Caco-2 (cell line): ENCODE measurements at regions of chr1 and their contacts with region 1.

Region 1: DNA sequence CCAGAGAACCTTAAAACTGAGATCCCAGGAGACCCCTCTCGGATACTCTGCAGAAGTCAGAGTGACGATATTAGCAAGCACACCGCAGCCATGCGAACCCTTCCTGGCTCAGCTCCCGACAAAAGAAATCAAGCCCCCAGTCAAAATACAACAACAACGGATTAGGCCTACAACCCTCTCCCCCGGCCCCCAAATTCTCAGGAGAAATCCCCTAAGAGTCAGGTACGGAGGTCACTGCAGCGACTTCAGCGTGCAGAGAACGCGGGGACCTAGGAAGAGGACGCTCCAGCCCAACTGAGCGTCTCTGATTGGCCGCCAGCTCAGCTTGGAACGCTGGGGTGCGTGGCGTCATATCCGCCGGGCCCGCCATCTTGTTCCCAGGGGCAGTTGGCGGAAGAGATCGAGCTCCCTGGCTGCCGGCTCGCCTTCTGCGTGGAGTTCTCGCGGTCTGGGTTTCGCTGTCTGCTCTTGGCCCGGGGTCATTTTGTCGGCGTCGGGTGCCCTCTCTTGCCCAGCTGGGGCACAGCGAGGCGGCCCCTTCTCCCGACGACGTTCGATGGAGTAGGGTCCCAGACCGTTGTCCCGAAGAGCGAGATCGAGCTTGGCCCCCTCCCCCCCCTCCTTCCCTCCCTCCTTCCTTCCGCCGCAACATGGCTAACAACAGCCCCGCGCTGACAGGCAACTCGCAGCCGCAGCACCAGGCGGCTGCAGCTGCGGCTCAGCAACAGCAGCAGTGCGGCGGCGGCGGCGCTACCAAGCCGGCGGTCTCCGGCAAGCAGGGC is at the start of gene PRPF38B:
- DNase-seq: peak; percentile 88 to 90
- H3K4me3 ChIP-seq: peak within 1 kb of the TSS; percentile 56
- H3K4me3 Mint-ChIP-seq: peak within 1 kb of the TSS; percentile 99
- H3K27ac Mint-ChIP-seq: peak within 1 kb of the TSS; percentile 65
- H3K4me1 ChIP-seq: peaks cover 9% of the 10 kb centered on the region; the same call in 1 of the 2 replicates
- H3K4me1 Mint-ChIP-seq: peaks cover 7% of the 10 kb centered on the region
- H3K27me3 ChIP-seq: no peaks in the 10 kb centered on the region
- H3K27me3 Mint-ChIP-seq: no peaks in the 10 kb centered on the region
- CTCF ChIP-seq: no peak
- total RNA-seq, gene PRPF38B: 37.7 and 37.8 TPM in 2 replicates

Region 2: DNA sequence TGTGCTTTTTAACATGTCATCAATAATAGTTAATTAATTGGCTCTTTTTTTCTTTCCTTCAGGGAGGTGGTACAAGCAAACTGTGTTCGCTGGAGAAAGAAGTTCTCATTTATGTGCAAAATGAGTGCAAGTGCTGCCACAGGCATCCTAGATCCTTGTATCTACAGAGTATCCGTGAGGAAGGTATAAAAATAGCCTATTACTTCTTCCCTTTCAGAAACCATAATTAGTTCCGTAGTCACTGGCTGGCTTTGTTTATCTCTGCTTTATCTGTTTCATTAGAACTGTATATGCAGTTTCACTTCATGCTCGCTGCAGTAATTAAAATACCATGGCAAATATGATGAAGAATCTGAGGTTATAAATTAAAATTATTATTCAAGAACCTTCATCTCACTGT is 91.6 kb before region 1 on chr1:
- CTCF ChIA-PET with region 1: no interaction called
- POLR2A ChIA-PET with region 1: no interaction called
- intact Hi-C with region 1: no loop called
- DNase-seq: no peak
- H3K4me3 ChIP-seq: no peak overlapping the region
- H3K4me3 Mint-ChIP-seq: no peak overlapping the region
- H3K27ac Mint-ChIP-seq: no peak overlapping the region
- H3K4me1 ChIP-seq: no peaks in the 10 kb centered on the region
- H3K4me1 Mint-ChIP-seq: peaks cover 5% of the 10 kb centered on the region
- H3K27me3 ChIP-seq: no peaks in the 10 kb centered on the region
- H3K27me3 Mint-ChIP-seq: no peaks in the 10 kb centered on the region
- CTCF ChIP-seq: no peak

Region 3: GRCh38 chr1:108639899-108640560 is 52.1 kb before region 1 on chr1:
- CTCF ChIA-PET with region 1: no interaction called
- POLR2A ChIA-PET with region 1: no interaction called
- intact Hi-C with region 1: no loop called
- DNase-seq: no peak
- H3K4me3 ChIP-seq: no peak overlapping the region
- H3K4me3 Mint-ChIP-seq: no peak overlapping the region
- H3K27ac Mint-ChIP-seq: no peak overlapping the region
- H3K4me1 ChIP-seq: no peaks in the 10 kb centered on the region
- H3K4me1 Mint-ChIP-seq: no peaks in the 10 kb centered on the region
- H3K27me3 ChIP-seq: no peaks in the 10 kb centered on the region
- H3K27me3 Mint-ChIP-seq: no peaks in the 10 kb centered on the region
- CTCF ChIP-seq: no peak

Region 4: GRCh38 chr1:108661030-108661620 is 31.0 kb before region 1 on chr1 and contains the start of gene HENMT1:
- CTCF ChIA-PET with region 1: interaction called, 11 read pairs
- POLR2A ChIA-PET with region 1: interaction called, 35 read pairs
- intact Hi-C with region 1: loop called (anchors 2 kb)
- DNase-seq: peak; percentile 67 to 68
- H3K4me3 ChIP-seq: peak within 1 kb of the TSS; percentile 41
- H3K4me3 Mint-ChIP-seq: peak within 1 kb of the TSS; percentile 80
- H3K27ac Mint-ChIP-seq: peak within 1 kb of the TSS; percentile 91
- H3K4me1 ChIP-seq: no peaks in the 10 kb centered on the region
- H3K4me1 Mint-ChIP-seq: peaks cover 7% of the 10 kb centered on the region
- H3K27me3 ChIP-seq: no peaks in the 10 kb centered on the region
- H3K27me3 Mint-ChIP-seq: no peaks in the 10 kb centered on the region
- CTCF ChIP-seq: no peak
- total RNA-seq, gene HENMT1: 18.7 and 21.0 TPM in 2 replicates

Region 5: GRCh38 chr1:108746372-108747205 is 54.5 kb after region 1 on chr1 and contains the start of gene STXBP3:
- CTCF ChIA-PET with region 1: no interaction called
- POLR2A ChIA-PET with region 1: no interaction called
- intact Hi-C with region 1: loop called (anchors 5 kb)
- DNase-seq: peak; percentile 97
- H3K4me3 ChIP-seq: peak within 1 kb of the TSS; percentile 65
- H3K4me3 Mint-ChIP-seq: peak within 1 kb of the TSS; percentile 100
- H3K27ac Mint-ChIP-seq: peak within 1 kb of the TSS; percentile 100
- H3K4me1 ChIP-seq: no peaks in the 10 kb centered on the region
- H3K4me1 Mint-ChIP-seq: peaks cover 9% of the 10 kb centered on the region
- H3K27me3 ChIP-seq: no peaks in the 10 kb centered on the region
- H3K27me3 Mint-ChIP-seq: no peaks in the 10 kb centered on the region
- CTCF ChIP-seq: peak; percentile 61 to 91
- total RNA-seq, gene STXBP3: 24.1 and 34.3 TPM in 2 replicates

Region 6: DNA sequence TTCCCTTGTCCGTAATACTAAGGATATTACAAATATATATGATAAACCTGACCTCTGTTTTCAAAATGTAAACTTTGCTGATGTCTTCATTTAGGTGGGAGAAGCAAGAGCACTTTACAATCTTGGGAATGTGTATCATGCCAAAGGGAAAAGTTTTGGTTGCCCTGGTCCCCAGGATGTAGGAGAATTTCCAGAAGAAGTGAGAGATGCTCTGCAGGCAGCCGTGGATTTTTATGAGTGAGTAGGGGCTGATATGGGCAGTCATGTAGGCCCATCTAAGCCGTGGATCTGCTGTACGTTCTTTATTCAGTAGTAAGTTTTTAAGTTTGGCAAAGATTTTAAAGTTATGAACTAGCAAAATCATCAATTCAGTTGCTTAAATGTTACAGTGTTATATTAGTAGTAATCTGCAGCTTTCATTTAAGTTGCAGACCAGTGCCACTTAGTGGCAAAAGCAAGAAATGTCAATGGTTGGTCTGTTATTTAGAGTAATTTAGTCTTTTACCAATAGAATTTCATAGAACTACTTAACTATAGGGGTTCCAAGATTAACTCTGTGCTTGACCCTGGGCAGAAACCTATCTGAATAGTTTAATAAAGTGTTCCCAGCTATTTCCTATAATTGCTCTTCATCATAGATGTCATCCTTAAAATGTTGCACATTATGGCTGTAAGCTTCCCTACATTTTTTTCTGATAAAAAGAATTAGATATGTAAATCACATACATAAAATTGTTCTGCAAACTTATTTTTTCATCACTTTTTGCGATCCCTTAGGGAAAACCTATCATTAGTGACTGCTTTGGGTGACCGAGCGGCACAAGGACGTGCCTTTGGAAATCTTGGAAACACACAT is 206.0 kb after region 1 on chr1:
- CTCF ChIA-PET with region 1: no interaction called
- POLR2A ChIA-PET with region 1: no interaction called
- intact Hi-C with region 1: loop called (anchors 2 kb)
- DNase-seq: peak in 1 of 2 experiments; percentile 15
- H3K4me3 ChIP-seq: no peak overlapping the region
- H3K4me3 Mint-ChIP-seq: no peak overlapping the region
- H3K27ac Mint-ChIP-seq: no peak overlapping the region
- H3K4me1 ChIP-seq: no peaks in the 10 kb centered on the region; the same call in 1 of the 2 replicates
- H3K4me1 Mint-ChIP-seq: no peaks in the 10 kb centered on the region
- H3K27me3 ChIP-seq: no peaks in the 10 kb centered on the region
- H3K27me3 Mint-ChIP-seq: no peaks in the 10 kb centered on the region
- CTCF ChIP-seq: peak; percentile 28 to 57